HepG2 (cell line): ENCODE measurements at regions of chr7 and their contacts with region 1.

Region 1: GRCh38 chr7:47945261-47946001 is 2.8 kb downstream of the PKD1L1 start:
- DNase-seq: peak; percentile 57
- ATAC-seq: peak; percentile 61; the same call in 2 of the 3 replicates
- H3K4me3 ChIP-seq: no peak overlapping the region
- H3K27ac ChIP-seq: no peak overlapping the region
- H3K4me1 ChIP-seq: peaks cover 29% of the 10 kb centered on the region
- H3K27me3 ChIP-seq: peaks cover 2 to 7% of the 10 kb centered on the region in 2 experiments; a peak in 2 of 5 replicates
- CTCF ChIP-seq: peak; percentile 79
- EP300 ChIP-seq: no peak
- POLR2A ChIP-seq: no peak
- RAD21 ChIP-seq: peak; percentile 60; the same call in 1 of the 2 replicates

Region 2: DNA sequence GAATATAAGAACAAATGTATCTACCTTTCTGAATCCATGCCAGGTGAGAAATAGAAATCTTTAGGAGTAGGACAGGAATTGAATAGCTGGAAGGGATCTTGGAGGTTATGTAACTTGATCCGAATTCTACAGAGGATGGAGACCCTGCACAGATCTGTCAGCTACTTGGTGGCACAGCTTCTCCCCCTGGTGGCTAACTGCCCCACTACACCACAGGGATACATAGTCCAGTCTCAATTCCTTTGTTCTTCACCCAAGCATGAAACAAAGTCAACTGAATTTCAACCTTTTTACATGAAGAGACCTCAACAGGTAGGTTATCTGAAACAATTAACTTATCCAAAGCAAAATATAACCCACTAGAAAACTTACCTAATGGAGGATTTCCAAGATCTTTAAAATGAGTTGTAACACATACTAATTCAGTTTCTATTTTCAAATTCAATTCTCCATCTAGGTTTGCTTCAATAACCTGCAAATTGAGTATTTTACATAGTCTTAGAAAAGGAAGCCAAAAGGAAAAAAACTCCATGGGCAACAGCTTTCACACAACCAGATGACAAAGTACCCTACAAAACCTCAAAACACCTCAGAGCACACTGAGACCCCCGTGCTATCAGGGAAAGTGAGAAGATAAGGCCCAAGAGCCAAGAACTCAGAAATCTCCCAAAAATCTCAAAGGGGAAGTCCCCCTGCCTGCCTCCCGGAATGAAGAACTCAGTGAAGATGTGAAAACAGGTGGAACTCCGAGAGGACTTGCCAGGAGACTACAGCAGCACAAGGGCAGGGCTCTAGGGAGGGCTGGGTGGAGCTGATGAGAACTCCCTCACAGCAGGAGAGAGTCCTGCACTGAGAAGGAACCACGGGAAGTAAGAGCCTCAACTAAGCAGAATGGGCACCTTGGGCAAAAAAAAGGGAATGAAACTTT is 23.7 kb after region 1 on chr7:
- CTCF ChIA-PET with region 1: interaction called, 17 read pairs
- POLR2A ChIA-PET with region 1: no interaction called
- in situ Hi-C with region 1: no loop called
- intact Hi-C with region 1: loop called (anchors 1 kb)
- DNase-seq: peak; percentile 53
- ATAC-seq: peak; percentile 96
- H3K4me3 ChIP-seq: no peak overlapping the region
- H3K27ac ChIP-seq: no peak overlapping the region
- H3K4me1 ChIP-seq: no peaks in the 10 kb centered on the region
- H3K27me3 ChIP-seq: no peaks in the 10 kb centered on the region
- CTCF ChIP-seq: peak; percentile 85
- EP300 ChIP-seq: no peak
- POLR2A ChIP-seq: no peak
- RAD21 ChIP-seq: peak; percentile 70

Region 3: GRCh38 chr7:48224042-48224441 is 278.6 kb after region 1 on chr7:
- CTCF ChIA-PET with region 1: no interaction called
- POLR2A ChIA-PET with region 1: no interaction called
- in situ Hi-C with region 1: no loop called
- intact Hi-C with region 1: no loop called
- DNase-seq: no peak
- ATAC-seq: no peak
- H3K4me3 ChIP-seq: no peak overlapping the region
- H3K27ac ChIP-seq: no peak overlapping the region
- H3K4me1 ChIP-seq: no peaks in the 10 kb centered on the region
- H3K27me3 ChIP-seq: peaks cover 0 to 1% of the 10 kb centered on the region in 2 experiments; a peak in 1 of 5 replicates
- CTCF ChIP-seq: no peak
- EP300 ChIP-seq: no peak
- POLR2A ChIP-seq: no peak
- RAD21 ChIP-seq: no peak